ENCODE measurements at regions of chr4 and their contacts with region 1.

Region 1: GRCh38 chr4:9765091-9765490 is 16.3 kb upstream of the DRD5 start:
- DNase-seq: no peak
- ATAC-seq: no peak

Region 2: GRCh38 chr4:9898596-9899305 is 133.7 kb after region 1 on chr4:
- intact Hi-C with region 1: loop called (anchors 2 kb)
- DNase-seq: peak; percentile 72
- ATAC-seq: peak; percentile 91

Region 3: DNA sequence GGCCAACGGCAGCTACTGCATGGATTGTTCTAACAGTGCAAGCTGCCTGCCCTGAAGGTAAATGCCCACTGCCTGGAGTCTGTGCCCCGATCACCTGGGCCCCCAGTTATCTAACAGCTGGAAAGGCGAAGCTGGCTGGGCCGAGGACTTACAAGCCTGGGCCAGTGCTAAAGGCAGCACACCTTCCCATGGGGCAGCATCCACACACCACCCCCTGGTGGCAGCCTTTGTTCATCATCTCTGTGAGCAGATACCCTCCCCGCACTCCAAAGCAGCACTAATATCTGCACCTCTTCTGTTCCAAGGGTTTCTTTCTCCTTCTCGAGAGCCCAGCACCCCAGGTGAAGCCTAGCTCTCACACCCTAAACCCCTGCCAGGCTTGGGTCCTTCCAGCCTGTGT is 248.6 kb after region 1 on chr4:
- intact Hi-C with region 1: loop called (anchors 2 kb)
- DNase-seq: peak; percentile 65
- ATAC-seq: peak; percentile 69

Measured in Right ventricle myocardium superior (tissue), 1 donor.